ENCODE measurements at regions of chr12 and their contacts with region 1.

Region 1: DNA sequence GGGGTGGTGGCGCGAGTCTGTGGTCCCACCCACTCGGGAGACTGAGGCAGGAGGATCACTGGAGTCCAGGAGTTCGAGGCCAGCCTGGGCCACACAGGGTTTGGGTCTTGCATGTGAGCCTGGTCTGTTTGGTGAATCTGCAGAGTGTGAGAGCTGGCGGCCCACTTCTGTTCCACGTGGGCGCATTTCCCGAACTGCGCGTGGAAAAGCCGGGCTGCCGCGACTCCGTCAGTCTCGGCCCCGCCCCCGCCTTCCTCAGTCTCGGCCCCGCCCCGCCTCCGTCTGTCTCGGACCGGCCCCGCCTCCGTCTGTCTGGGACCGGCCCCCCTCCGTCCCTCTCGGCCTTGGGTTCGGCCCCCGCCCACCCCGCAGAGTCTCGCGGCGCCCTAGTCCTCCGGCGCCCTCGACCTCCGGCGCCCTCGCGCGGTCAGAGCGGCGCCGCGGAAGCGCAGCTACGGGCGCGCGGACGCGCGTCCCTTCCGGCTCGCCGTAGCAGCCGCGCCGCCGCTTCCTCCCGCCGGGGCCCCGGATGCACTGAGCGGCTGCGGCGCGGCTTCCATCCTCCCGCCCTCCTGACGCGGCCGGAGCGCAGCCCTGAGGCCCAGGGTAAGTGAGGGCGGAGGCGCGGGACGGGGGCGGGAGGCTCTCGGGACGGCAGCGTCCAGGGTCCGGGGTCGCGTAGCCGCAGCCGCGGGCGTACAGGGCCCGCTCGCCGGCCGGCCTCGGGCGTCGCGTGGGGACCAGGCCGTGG is at the start of gene EP400:
- DNase-seq: peak; percentile 96
- ATAC-seq: peak; percentile 95
- H3K4me3 Mint-ChIP-seq: peak within 1 kb of the TSS; percentile 91
- H3K27ac Mint-ChIP-seq: peak within 1 kb of the TSS; percentile 89
- H3K4me1 Mint-ChIP-seq: peaks cover 29% of the 10 kb centered on the region
- H3K27me3 Mint-ChIP-seq: no peaks in the 10 kb centered on the region
- total RNA-seq, gene EP400: 66.7 to 70.2 TPM

Region 2: GRCh38 chr12:131928711-131929580 is 20.7 kb before region 1 on chr12 and contains the start of gene PUS1:
- POLR2A ChIA-PET with region 1: interaction called, 17 read pairs
- DNase-seq: peak; percentile 93
- ATAC-seq: peak; percentile 79
- H3K4me3 Mint-ChIP-seq: peak within 1 kb of the TSS; percentile 98
- H3K27ac Mint-ChIP-seq: peak within 1 kb of the TSS; percentile 98
- H3K4me1 Mint-ChIP-seq: peaks cover 15% of the 10 kb centered on the region
- H3K27me3 Mint-ChIP-seq: no peaks in the 10 kb centered on the region
- total RNA-seq, gene PUS1: 45.3 to 48.6 TPM

Region 3: GRCh38 chr12:132018193-132018916 is 68.7 kb after region 1 on chr12:
- POLR2A ChIA-PET with region 1: no interaction called
- DNase-seq: peak; percentile 19
- ATAC-seq: no peak
- H3K4me3 Mint-ChIP-seq: no peak overlapping the region
- H3K27ac Mint-ChIP-seq: no peak overlapping the region
- H3K4me1 Mint-ChIP-seq: no peaks in the 10 kb centered on the region
- H3K27me3 Mint-ChIP-seq: no peaks in the 10 kb centered on the region